A673 (cell line): ENCODE measurements at regions of chr7 and their contacts with region 1.

Region 1: DNA sequence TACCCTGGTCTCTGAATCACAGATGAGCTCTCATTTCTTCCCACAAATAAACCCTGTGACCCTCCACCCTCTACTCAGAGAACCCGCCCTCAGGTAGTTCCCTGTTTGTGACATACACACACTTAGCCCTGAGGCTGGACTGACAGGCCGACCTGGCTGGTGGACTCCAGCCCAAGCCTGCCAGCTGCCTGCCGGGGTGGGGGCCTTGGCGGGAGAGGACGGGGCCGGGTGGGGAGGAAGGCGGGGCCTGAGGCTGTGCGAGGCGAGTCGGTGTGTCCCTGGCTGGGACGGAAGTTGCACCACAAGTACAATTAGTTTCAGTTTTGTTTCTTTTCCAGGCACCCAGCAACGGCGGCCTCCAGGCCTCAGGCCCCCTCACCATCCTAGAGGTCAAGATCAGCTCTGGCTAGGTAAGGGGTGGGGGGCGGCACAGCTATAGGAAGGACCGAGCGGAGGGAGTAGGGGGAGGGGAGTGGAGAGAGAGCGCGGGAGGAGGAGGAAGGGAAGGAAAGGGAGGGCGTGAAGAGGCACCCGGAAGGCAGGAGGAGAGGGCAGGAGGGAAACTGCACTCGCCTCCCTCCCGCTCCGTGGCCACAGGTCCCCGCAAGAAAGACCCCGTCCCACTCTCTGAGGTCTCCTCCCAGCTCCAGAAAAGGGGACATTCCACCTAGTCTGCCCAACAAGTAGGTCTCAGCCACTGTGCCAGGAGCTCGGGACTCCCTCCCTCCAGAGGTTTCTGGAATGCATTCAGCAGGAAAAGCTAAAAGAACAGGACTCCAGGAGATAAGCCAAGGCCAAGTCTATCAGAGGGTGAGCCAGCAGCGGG is at the start of gene TRIM56:
- DNase-seq: peak; percentile 78
- H3K4me3 ChIP-seq: peak within 1 kb of the TSS; percentile 75
- H3K27ac ChIP-seq: peak within 1 kb of the TSS; percentile 90
- H3K4me1 ChIP-seq: peaks cover 11% of the 10 kb centered on the region
- H3K27me3 ChIP-seq: no peaks in the 10 kb centered on the region
- CTCF ChIP-seq: no peak
- total RNA-seq, gene TRIM56: 27.5 and 32.3 TPM in 2 replicates

Region 2: DNA sequence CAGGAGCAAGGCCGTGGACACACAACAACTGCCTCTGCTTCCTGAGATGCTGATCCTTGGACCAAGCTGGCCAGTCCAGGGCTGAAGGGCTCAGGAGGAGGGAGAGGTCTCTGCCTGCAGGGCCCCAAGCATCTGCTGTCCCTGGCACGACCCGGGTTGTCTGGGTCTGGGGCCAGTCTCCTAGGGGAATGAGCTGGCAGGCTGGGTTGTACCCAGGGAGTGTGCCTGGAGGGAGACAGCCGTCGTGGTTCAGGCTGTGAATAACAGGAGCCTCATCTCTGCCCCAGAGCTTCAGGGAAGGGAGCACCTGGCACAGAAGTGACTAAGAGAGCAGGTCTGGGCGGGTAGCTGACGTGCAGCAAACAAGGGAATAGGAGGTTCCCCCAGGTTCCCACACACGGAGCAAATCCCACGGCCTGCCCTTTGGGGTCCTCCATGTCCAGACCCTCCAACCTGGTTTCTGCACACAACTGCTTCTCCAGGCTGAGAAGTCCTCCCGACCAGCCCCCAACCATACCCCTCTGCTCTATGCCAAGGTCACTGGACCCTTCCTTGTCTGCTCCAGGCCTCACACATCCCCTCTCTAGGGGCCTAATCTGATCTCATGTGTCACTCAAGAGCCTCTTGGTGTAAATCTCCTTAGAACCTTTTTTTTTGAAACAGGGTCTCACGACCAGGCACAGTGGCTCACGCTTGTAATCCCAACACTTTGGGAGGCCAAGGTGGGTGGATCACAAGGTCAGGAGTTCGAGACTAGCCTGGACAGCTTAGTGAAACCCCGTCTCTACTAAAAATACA is 23.8 kb after region 1 on chr7:
- CTCF ChIA-PET with region 1: no interaction called
- POLR2A ChIA-PET with region 1: no interaction called
- intact Hi-C with region 1: no loop called
- DNase-seq: no peak
- H3K4me3 ChIP-seq: no peak overlapping the region
- H3K27ac ChIP-seq: peak overlapping the region; percentile 30
- H3K4me1 ChIP-seq: peaks cover 21% of the 10 kb centered on the region
- H3K27me3 ChIP-seq: no peaks in the 10 kb centered on the region
- CTCF ChIP-seq: no peak

Region 3: DNA sequence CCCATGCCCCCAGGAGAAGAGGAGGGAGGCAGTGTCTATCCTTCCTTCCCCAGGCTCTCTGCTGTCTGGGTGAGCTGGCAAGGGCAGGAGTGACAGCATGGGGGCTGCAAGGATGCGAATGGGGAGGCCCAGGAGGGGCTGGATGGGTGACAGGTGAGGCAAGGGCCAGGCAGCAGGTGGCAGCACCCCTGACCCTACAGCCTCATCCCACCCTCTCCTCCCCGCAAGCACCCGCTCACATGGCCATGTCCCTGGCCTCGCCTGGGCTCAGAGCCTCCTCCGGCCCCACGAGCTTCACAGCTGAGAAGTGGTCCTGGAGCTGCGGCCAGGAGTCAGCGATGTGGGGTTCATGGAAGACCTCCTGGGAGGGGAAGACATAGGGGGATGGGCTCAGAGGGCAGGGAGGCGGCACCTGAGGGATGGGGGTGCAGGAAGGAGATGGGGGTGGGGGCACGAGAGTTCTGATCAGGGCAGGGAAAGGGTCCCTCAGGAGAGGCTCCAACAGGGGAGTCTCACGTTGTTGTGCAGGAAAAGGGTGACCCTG is 126.7 kb after region 1 on chr7:
- CTCF ChIA-PET with region 1: interaction called, 11 read pairs
- POLR2A ChIA-PET with region 1: no interaction called
- intact Hi-C with region 1: no loop called
- DNase-seq: no peak
- H3K4me3 ChIP-seq: no peak overlapping the region
- H3K27ac ChIP-seq: no peak overlapping the region
- H3K4me1 ChIP-seq: peaks cover 24% of the 10 kb centered on the region
- H3K27me3 ChIP-seq: no peaks in the 10 kb centered on the region
- CTCF ChIP-seq: no peak